Aorta (tissue), 5 donors: ENCODE measurements at regions of chr13 and their contacts with region 1.

Region 1: GRCh38 chr13:33710924-33711323 is 107.0 kb upstream of the RFC3 start:
- DNase-seq: no peak
- ATAC-seq: no peak
- H3K4me3 ChIP-seq: no peak overlapping the region
- H3K27ac ChIP-seq: no peak overlapping the region
- H3K4me1 ChIP-seq: no peaks in the 10 kb centered on the region
- H3K27me3 ChIP-seq: no peaks in the 10 kb centered on the region

Region 2: GRCh38 chr13:33487575-33488243 is 223.2 kb before region 1 on chr13:
- intact Hi-C with region 1: no loop called
- DNase-seq: no peak
- ATAC-seq: peak; percentile 88
- H3K4me3 ChIP-seq: peak overlapping the region; percentile 20 to 87
- H3K27ac ChIP-seq: peak overlapping the region in 1 of 2 donors; percentile 40
- H3K4me1 ChIP-seq: no peaks in the 10 kb centered on the region
- H3K27me3 ChIP-seq: no peaks in the 10 kb centered on the region

Region 3: GRCh38 chr13:33624740-33625139 is 86.2 kb before region 1 on chr13:
- intact Hi-C with region 1: no loop called
- DNase-seq: no peak
- ATAC-seq: no peak
- H3K4me3 ChIP-seq: no peak overlapping the region
- H3K27ac ChIP-seq: no peak overlapping the region
- H3K4me1 ChIP-seq: no peaks in the 10 kb centered on the region
- H3K27me3 ChIP-seq: no peaks in the 10 kb centered on the region

Region 4: DNA sequence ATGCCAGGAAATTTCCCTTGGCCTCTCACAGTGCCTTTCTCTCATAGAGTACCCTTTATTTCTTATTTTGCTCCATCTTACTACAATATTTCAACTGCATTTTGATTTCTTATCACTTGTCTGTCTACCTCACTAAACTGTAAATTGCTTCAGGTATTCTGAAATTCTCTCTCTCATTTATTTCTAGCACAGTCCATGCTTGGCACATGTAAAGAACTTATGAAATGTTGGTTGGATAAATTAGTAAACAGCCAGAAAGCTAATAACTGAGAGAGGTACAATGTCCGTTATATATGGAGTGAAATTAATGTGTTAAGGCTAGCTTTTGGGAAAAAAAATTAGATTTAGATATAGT is 31.3 kb before region 1 on chr13:
- intact Hi-C with region 1: loop called in 1 of 2 experiments (anchors 2 kb)
- DNase-seq: no peak
- ATAC-seq: no peak
- H3K4me3 ChIP-seq: no peak overlapping the region
- H3K27ac ChIP-seq: no peak overlapping the region
- H3K4me1 ChIP-seq: no peaks in the 10 kb centered on the region
- H3K27me3 ChIP-seq: no peaks in the 10 kb centered on the region

Region 5: GRCh38 chr13:33846444-33847062 is 135.6 kb after region 1 on chr13:
- intact Hi-C with region 1: no loop called
- DNase-seq: no peak
- ATAC-seq: no peak
- H3K4me3 ChIP-seq: no peak overlapping the region
- H3K27ac ChIP-seq: no peak overlapping the region
- H3K4me1 ChIP-seq: no peaks in the 10 kb centered on the region
- H3K27me3 ChIP-seq: no peaks in the 10 kb centered on the region